ENCODE measurements at regions of chr13 and their contacts with region 1.

Region 1: GRCh38 chr13:110915057-110915873 is at the start of gene ANKRD10:
- DNase-seq: peak; percentile 94
- ATAC-seq: peak; percentile 81
- H3K4me3 ChIP-seq: peak within 1 kb of the TSS; percentile 98
- H3K27ac ChIP-seq: peak within 1 kb of the TSS; percentile 84
- H3K4me1 ChIP-seq: peaks cover 31% of the 10 kb centered on the region
- H3K27me3 ChIP-seq: no peaks in the 10 kb centered on the region
- CTCF ChIP-seq: peak; percentile 62
- total RNA-seq, gene ANKRD10: 47.1 and 60.2 TPM in 2 replicates

Region 2: DNA sequence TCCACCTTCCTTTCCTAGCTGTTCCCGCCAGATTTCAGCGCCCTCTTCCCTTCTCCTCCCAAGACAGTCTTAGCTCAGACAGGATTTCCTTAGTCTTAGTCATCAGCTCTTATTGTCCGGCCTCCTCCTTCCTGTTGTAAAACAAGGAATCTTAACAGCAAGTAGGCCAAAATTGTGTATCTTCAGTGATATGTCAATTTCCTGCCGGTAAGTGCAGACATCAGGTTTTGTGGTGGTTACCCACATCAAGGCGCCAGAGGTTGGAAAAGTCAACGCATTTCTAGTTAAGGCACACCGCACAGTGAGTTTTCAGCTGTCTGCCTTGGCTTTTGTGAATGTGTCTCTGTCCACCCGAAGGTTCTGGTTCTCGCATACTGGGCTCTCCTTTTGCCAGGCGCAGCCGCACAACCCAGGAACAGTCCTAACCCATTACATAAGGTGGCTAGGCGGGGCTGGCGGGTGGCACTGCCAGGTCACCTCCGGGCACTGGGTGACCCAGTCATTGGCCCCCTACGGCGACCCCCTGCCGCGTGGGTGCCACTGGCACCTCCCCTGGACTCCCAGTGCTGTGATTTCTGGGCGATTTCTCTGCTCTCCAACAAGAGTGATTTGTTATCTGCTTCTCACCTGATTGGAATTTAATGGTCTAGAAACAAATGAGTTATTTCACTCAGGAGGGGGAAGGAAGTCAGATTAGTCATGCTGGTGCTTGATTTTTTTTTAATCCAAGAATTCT is 595.3 kb before region 1 on chr13:
- CTCF ChIA-PET with region 1: no interaction called
- POLR2A ChIA-PET with region 1: no interaction called
- intact Hi-C with region 1: no loop called
- DNase-seq: peak; percentile 81
- ATAC-seq: peak; percentile 73
- H3K4me3 ChIP-seq: peak overlapping the region; percentile 50
- H3K27ac ChIP-seq: peak overlapping the region; percentile 88
- H3K4me1 ChIP-seq: peaks cover 37% of the 10 kb centered on the region
- H3K27me3 ChIP-seq: no peaks in the 10 kb centered on the region
- CTCF ChIP-seq: no peak

Region 3: DNA sequence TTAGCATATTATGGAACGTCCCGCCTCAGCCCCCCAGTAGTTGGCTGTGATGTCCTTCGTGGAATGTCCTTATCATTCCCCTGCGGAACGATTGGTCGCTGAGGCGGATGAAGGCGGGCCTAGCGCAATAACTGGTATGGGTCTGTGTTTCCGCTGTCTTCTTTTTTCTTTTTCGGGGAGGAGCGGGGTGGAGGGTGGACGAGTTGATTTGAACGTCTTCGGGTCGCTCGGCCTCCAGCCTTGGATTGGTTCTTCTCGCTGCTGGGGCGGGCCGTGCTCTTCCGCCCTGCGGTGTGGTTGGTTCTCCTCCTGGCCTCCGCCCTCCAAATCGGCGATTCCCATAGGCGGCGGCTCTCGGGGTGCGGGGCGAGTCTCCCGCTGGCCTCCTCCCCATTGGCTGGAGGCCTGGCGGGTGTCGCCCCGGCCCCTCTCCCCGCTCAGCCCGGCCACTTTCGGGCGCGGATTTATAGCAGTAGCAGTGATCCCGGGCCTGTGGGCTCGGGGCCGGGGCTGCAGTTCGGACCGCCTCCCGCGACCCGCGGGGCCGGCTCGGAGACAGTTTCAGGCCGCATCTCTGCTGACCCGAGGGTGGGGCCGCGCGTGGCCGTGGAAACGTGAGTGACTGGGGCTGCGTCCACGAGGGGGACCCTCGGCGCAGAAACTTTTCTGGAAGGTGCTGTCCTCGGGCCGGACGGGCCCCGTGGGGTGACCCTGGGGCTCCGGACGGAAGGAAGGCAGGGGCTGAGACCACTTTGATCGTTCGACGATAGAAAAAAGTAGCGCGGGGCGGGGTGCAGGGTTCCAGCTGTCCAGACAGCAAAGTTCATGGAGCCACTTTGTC is 199.7 kb before region 1 on chr13:
- CTCF ChIA-PET with region 1: no interaction called
- POLR2A ChIA-PET with region 1: interaction called, 9 read pairs
- intact Hi-C with region 1: loop called (anchors 2 kb)
- DNase-seq: peak; percentile 96
- ATAC-seq: peak; percentile 62
- H3K4me3 ChIP-seq: peak overlapping the region; percentile 99
- H3K27ac ChIP-seq: peak overlapping the region; percentile 48
- H3K4me1 ChIP-seq: peaks cover 8% of the 10 kb centered on the region
- H3K27me3 ChIP-seq: no peaks in the 10 kb centered on the region
- CTCF ChIP-seq: peak; percentile 19; the same call in 1 of the 2 replicates

Region 4: DNA sequence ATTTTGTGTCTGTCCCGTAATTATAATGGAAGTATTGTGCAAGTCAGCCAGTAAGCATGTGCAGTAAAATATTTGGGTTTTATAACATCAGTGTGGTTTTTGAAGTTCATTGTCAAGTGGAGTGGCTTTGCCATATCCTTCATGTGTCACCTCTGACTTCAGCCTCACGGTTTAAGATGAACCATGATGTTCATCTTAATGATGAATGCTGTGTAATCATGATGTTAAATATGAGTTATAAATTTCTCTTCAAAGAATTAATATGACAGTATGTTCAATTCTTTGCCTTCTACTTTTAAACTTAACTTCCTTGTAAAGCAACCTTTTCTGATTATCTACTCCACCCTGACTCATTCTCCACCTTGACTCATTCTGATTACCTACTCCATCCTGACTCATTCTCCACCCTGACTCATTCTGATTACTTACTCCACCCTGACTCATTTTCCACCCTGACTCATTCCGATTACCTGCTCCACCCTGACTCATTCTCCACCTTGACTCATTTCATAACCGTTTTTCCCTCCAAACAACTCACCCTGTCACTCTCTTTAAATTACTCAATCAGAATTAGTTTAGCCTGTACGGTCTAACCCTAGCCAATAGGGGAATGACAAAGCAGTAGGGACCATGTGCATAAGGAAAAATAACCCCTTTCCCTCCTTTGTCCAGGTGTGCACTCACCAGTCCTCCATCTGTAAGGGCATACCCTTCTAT is 49.9 kb after region 1 on chr13:
- CTCF ChIA-PET with region 1: no interaction called
- POLR2A ChIA-PET with region 1: no interaction called
- intact Hi-C with region 1: loop called (anchors 1 kb)
- DNase-seq: peak; percentile 91
- ATAC-seq: peak; percentile 92
- H3K4me3 ChIP-seq: no peak overlapping the region; the same call in 1 of the 2 replicates
- H3K27ac ChIP-seq: peak overlapping the region; percentile 94
- H3K4me1 ChIP-seq: peaks cover 24% of the 10 kb centered on the region
- H3K27me3 ChIP-seq: no peaks in the 10 kb centered on the region
- CTCF ChIP-seq: no peak

Region 5: GRCh38 chr13:111049802-111050538 is 134.7 kb after region 1 on chr13:
- CTCF ChIA-PET with region 1: no interaction called
- POLR2A ChIA-PET with region 1: no interaction called
- intact Hi-C with region 1: loop called (anchors 1 kb)
- DNase-seq: peak; percentile 35
- ATAC-seq: no peak
- H3K4me3 ChIP-seq: no peak overlapping the region
- H3K27ac ChIP-seq: no peak overlapping the region
- H3K4me1 ChIP-seq: no peaks in the 10 kb centered on the region
- H3K27me3 ChIP-seq: no peaks in the 10 kb centered on the region
- CTCF ChIP-seq: peak; percentile 73

Region 6: DNA sequence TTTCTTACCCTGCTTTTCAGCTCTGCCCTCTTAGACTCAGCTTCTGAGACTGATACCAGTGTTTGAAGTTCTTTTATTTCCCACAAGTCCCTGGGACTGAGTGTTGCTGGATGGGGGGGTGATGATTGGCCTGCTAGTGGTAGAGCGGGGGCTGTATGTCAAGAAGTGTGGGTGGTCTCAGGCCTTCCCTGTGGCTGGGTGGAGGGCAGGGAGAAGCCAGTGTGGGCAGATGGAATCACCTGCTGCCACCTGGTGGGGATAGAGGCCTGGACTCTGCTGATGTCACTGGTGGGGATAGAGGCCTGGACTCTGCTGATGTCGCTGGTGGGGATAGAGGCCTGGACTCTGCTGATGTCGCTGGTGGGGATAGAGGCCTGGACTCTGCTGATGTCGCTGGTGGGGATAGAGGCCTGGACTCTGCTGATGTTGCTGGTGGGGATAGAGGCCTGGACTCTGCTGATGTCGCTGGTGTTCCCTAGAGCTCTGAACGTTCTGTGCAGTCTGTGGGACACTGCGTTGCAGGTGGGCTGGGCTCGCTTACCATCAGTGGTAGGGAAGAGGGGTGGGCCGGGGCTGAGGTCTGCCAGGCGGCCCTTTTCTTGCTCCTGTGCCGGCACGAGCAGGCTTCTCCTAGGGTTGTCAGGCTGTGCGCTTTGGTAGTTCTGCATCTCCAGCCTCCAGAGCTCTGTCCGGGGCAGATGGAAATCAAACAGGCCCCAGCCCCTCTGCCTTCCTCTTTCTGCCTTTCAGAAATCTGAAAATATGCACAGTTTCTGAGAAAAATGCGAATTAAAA is 301.1 kb after region 1 on chr13:
- CTCF ChIA-PET with region 1: no interaction called
- POLR2A ChIA-PET with region 1: no interaction called
- intact Hi-C with region 1: loop called (anchors 10 kb)
- DNase-seq: peak; percentile 18
- ATAC-seq: peak; percentile 78
- H3K4me3 ChIP-seq: no peak overlapping the region
- H3K27ac ChIP-seq: no peak overlapping the region
- H3K4me1 ChIP-seq: no peaks in the 10 kb centered on the region
- H3K27me3 ChIP-seq: no peaks in the 10 kb centered on the region
- CTCF ChIP-seq: peak; percentile 53